ENCODE measurements at regions of chr18 and their contacts with region 1.

Region 1: DNA sequence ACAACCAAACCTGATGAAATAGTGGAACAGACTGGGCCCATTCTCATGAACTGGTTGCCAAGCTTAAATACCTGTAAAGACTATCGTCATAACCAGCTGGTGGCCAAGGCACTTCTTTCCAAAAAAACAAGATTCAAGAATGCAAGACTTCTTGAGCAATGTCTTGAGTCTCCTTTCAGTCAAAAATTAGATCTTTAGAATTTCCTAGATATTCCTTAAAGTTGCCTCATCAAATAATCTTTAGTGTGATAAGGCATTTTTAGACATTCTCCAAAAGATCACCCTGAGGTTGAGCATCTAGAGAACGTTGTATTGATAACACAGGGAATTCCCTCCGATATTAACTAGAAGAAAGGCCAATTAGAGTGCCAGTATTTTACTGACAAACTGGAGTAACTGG is 236.4 kb upstream of the MEX3C start:
- DNase-seq: no peak
- ATAC-seq: no peak
- H3K4me3 Mint-ChIP-seq: no peak overlapping the region
- H3K27ac Mint-ChIP-seq: no peak overlapping the region
- H3K4me1 Mint-ChIP-seq: no peaks in the 10 kb centered on the region
- H3K27me3 Mint-ChIP-seq: peaks cover 17% of the 10 kb centered on the region
- CTCF ChIP-seq: no peak

Region 2: GRCh38 chr18:51398104-51398503 is 35.8 kb before region 1 on chr18:
- CTCF ChIA-PET with region 1: no interaction called
- POLR2A ChIA-PET with region 1: no interaction called
- intact Hi-C with region 1: loop called (anchors 1 kb)
- DNase-seq: no peak
- ATAC-seq: no peak
- H3K4me3 Mint-ChIP-seq: no peak overlapping the region
- H3K27ac Mint-ChIP-seq: no peak overlapping the region
- H3K4me1 Mint-ChIP-seq: no peaks in the 10 kb centered on the region
- H3K27me3 Mint-ChIP-seq: peaks cover 6% of the 10 kb centered on the region
- CTCF ChIP-seq: no peak

Measured in activated B cell treated with CpG ODN at 0.5 μM for 24 hours (primary cell).